Activated T-helper 1 cell treated with anti-CD3 and anti-CD28 coated beads, Interleukin-12 subunit alpha, Interleukin-12 subunit beta, Interleukin-2, Interleukin-4 antibody, amounts not matched to agents 30 ng/mL and 10 ng/mL and 1 ng/mL, durations not matched to agents 14 hours and 24 hours and 36 hours (primary cell): ENCODE measurements at regions of chr3 and their contacts with region 1.

Region 1: DNA sequence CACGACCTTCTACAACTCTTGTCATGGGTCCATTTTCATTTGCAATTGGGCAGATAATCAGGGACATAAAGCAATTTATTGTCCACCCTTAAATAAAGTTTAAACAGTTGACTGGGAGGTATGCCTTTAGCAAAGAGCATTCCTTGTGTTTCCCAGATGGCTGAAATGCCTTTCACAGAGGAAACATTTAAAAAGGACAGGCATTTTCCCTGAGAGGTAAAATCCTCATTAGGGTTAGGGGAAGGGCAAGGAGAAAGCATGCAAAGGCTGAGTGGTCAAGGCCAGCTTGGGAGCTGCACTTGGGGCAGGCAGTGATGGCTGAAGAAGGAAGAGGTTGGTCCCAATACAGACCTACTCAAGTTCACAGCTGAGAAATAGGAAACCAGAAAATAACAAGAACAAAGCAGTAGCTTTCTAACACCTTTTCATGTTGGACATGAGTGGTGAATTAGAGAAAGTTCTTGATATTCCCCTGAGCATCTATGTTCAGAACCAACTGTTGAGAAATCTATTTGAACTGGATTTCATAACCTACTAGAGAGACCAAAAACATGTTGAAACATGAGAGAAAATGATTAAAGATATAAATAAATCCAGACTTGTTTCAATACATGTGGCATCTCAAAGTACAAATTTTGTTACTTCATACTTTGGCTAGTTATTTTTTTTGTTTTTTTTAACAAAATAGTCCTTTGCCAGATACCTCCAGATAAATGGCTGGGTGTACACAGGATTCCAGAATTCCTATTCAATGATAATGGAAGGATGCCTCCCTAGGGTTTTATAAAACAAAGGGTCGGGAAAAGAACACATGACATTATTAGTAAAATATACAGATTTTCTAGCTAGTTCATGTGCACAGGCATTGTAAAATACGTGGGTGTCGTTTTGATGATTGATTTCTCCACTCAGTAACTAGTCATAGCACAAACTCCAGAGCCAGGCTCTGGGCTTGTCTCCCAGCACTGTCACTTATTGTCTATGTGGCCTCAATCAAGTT is 34.3 kb upstream of the TNFSF10 start:
- DNase-seq: no peak
- H3K4me3 Mint-ChIP-seq: peak overlapping the region; percentile 26
- H3K27ac Mint-ChIP-seq: peak overlapping the region; percentile 68
- H3K4me1 Mint-ChIP-seq: peaks cover 62% of the 10 kb centered on the region
- H3K27me3 Mint-ChIP-seq: no peaks in the 10 kb centered on the region

Region 2: DNA sequence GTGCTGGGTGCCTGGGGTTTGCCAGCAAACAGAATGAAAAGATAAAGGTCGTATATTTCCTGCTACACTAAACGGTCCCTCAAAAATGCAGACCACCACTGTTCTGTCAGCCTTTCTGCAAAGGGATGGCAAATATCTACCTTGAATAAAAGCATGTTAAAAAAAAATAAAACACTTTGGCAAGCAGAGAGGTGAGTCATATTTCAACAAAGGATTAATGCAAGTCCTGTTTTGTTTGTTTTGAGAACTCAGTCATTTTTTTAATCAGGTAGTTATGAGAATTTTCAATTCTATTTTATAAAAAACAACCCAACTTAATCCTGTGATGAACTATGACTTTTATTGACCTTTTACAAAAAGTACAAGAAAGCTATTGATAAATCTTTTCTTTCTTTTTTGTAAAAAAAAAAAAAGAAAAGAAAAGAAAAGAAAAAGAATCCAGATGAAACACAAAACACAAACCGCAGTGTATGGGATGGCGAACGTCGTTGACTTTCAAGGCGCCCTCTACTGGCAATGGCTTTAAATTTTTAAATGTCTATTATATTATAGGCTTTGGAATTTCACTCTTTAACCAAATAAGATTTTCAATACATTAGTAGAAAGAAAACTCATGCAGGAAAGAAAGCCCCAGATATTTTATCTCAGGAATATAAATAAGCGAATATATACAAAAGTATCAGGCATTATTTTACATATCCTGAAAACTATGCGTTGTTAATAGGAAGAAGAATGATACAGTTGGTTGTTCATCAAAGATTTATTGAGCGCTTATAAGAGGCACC is 65.6 kb after region 1 on chr3:
- intact Hi-C with region 1: loop called (anchors 2 kb)
- DNase-seq: no peak
- H3K4me3 Mint-ChIP-seq: peak overlapping the region; percentile 50
- H3K27ac Mint-ChIP-seq: no peak overlapping the region
- H3K4me1 Mint-ChIP-seq: peaks cover 25% of the 10 kb centered on the region
- H3K27me3 Mint-ChIP-seq: peaks cover 2% of the 10 kb centered on the region

Region 3: GRCh38 chr3:172635588-172635987 is 78.1 kb after region 1 on chr3:
- intact Hi-C with region 1: no loop called
- DNase-seq: no peak
- H3K4me3 Mint-ChIP-seq: no peak overlapping the region
- H3K27ac Mint-ChIP-seq: peak overlapping the region; percentile 73
- H3K4me1 Mint-ChIP-seq: peaks cover 30% of the 10 kb centered on the region
- H3K27me3 Mint-ChIP-seq: no peaks in the 10 kb centered on the region